Activated B cell treated with CpG ODN at 0.5 μM for 24 hours (primary cell): ENCODE measurements at regions of chr4 and their contacts with region 1.

Region 1: GRCh38 chr4:47485047-47485692 is at the start of gene ATP10D:
- DNase-seq: peak; percentile 82
- ATAC-seq: peak; percentile 96
- H3K4me3 Mint-ChIP-seq: peak within 1 kb of the TSS; percentile 99
- H3K27ac Mint-ChIP-seq: peak within 1 kb of the TSS; percentile 99
- H3K4me1 Mint-ChIP-seq: peaks cover 64% of the 10 kb centered on the region
- H3K27me3 Mint-ChIP-seq: no peaks in the 10 kb centered on the region
- CTCF ChIP-seq: no peak
- total RNA-seq, gene ATP10D: 26.2 and 31.6 TPM in 2 replicates

Region 2: GRCh38 chr4:47471064-47471463 is 14.1 kb before region 1 on chr4:
- CTCF ChIA-PET with region 1: interaction called, 9 read pairs
- POLR2A ChIA-PET with region 1: interaction called, 71 read pairs
- intact Hi-C with region 1: loop called (anchors 1 kb)
- DNase-seq: no peak
- ATAC-seq: no peak
- H3K4me3 Mint-ChIP-seq: no peak overlapping the region
- H3K27ac Mint-ChIP-seq: no peak overlapping the region
- H3K4me1 Mint-ChIP-seq: peaks cover 6% of the 10 kb centered on the region
- H3K27me3 Mint-ChIP-seq: no peaks in the 10 kb centered on the region
- CTCF ChIP-seq: no peak

Region 3: DNA sequence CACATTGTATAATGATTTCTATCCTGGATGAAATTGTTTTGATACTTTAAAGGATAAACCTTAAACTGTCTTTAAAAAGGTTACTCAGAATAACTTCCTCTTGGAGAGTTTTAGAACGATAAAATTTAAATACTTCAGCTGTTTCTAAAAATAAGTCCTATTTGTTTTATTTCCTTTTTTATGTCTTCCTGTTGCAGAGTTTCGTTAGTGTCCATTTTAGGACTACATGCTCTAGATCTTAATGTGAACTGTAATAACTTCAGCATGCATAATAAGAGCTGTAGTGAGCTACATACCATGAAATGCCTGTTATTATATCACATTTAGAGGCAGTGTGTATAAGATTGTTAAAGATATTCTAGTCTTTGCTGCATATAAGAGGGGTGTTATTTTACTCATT is 14.5 kb after region 1 on chr4:
- CTCF ChIA-PET with region 1: interaction called, 3 read pairs
- POLR2A ChIA-PET with region 1: interaction called, 40 read pairs
- intact Hi-C with region 1: loop called (anchors 1 kb)
- DNase-seq: no peak
- ATAC-seq: peak; percentile 76
- H3K4me3 Mint-ChIP-seq: no peak overlapping the region
- H3K27ac Mint-ChIP-seq: no peak overlapping the region
- H3K4me1 Mint-ChIP-seq: peaks cover 12% of the 10 kb centered on the region
- H3K27me3 Mint-ChIP-seq: no peaks in the 10 kb centered on the region
- CTCF ChIP-seq: no peak

Region 4: GRCh38 chr4:47510506-47511143 is 25.5 kb after region 1 on chr4:
- CTCF ChIA-PET with region 1: interaction called, 7 read pairs
- POLR2A ChIA-PET with region 1: interaction called, 6 read pairs
- intact Hi-C with region 1: loop called (anchors 1 kb)
- DNase-seq: no peak
- ATAC-seq: peak; percentile 90
- H3K4me3 Mint-ChIP-seq: peak overlapping the region; percentile 21
- H3K27ac Mint-ChIP-seq: peak overlapping the region; percentile 76
- H3K4me1 Mint-ChIP-seq: peaks cover 70% of the 10 kb centered on the region
- H3K27me3 Mint-ChIP-seq: no peaks in the 10 kb centered on the region
- CTCF ChIP-seq: no peak

Region 5: DNA sequence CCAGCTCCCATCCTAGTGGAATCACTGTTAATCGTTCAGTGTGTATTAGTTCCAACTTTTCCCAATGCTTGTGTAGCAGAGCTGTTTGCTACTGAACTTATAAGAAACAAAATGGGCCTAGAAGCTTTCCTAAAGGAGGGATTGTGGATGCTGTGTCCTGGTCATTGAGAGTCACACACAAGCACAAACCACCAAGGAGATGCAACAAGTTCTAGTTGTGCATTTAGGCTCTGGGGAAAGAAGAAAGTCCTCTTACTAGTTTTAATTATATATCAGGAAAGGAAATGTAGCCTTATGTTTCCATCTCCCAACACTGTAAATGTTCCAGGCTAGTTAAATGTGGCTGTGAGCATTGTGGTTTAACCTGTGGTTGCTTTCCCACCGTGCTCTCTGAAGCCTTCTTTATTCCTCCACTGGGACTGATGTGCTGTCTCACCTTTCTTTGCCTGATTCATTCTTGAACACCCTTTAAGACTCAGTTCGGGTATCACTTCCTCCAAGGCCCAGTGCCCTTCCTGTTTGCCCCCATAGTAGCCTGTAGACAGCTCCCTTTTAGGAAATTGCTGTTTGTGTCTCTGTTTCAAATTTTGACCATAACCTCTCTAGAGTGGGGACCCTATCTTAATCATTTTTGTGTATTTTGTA is 34.2 kb after region 1 on chr4:
- CTCF ChIA-PET with region 1: interaction called, 3 read pairs
- POLR2A ChIA-PET with region 1: interaction called, 6 read pairs
- intact Hi-C with region 1: loop called (anchors 2 kb)
- DNase-seq: no peak
- ATAC-seq: peak; percentile 99
- H3K4me3 Mint-ChIP-seq: no peak overlapping the region
- H3K27ac Mint-ChIP-seq: peak overlapping the region; percentile 69
- H3K4me1 Mint-ChIP-seq: peaks cover 20% of the 10 kb centered on the region
- H3K27me3 Mint-ChIP-seq: no peaks in the 10 kb centered on the region
- CTCF ChIP-seq: no peak